ENCODE measurements at regions of chr4 and their contacts with region 1.

Region 1: DNA sequence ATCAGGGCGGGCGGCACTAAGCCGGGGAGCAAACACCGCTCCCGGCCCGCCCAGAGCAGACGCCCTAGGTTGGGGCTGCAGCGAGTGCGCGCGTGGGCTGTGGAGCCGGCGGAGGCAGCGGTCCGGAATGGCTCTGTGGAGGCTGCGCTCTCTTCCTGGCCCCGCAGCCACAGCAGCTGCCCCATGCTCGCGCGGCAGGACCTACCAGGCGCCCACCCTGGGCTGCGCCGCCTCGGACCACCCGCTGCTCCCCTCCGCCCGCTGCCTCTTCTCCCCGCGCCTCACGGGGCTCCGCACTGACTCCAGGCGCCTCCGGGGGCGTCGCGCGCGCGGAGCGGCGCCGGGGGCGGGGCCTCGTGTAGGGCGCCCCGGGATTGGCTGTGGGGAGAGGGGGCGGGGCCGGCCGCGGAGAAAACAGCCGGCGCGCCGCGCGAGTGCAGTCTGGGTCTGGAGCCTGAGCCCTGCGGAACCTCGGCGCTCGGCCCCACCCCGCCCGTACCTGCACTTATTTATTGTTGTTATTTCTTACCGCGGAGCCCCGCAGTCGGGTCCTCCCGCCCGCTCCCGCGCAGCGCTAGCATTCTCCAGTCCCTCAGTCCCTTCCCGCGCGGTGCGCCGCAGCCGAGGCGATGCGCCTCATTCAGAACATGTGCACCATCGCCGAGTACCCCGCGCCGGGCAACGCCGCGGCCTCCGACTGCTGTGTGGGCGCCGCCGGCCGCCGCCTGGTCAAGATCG is at the start of gene RASL11B:
- DNase-seq: peak; percentile 82 to 92
- H3K4me3 ChIP-seq: peak within 1 kb of the TSS; percentile 71 to 78
- H3K27ac ChIP-seq: peak within 1 kb of the TSS; percentile 77 to 86
- H3K4me1 ChIP-seq: peaks cover 0 to 46% (median 23%) of the 10 kb centered on the region in 4 donors
- H3K27me3 ChIP-seq: no peaks in the 10 kb centered on the region
- CTCF ChIP-seq: peak; percentile 45 to 52

Region 2: GRCh38 chr4:52721968-52722815 is 139.9 kb before region 1 on chr4:
- intact Hi-C with region 1: loop called (anchors 5 kb)
- DNase-seq: peak; percentile 95 to 98
- H3K4me3 ChIP-seq: peak overlapping the region; percentile 81 to 83
- H3K27ac ChIP-seq: peak overlapping the region; percentile 89 to 96
- H3K4me1 ChIP-seq: peaks cover 0 to 13% (median 0%) of the 10 kb centered on the region in 4 donors
- H3K27me3 ChIP-seq: no peaks in the 10 kb centered on the region
- CTCF ChIP-seq: peak in 1 of 2 experiments; percentile 37